Dendritic cell treated with granulocyte-macrophage colony-stimulating factor and Interleukin-4, amounts not matched to agents 40 ng/mL and 50 ng/mL, for 4 days (primary cell): ENCODE measurements at regions of chr10 and their contacts with region 1.

Region 1: GRCh38 chr10:14971867-14972448 is 12.8 kb downstream of the MEIG1 start:
- H3K4me3 Mint-ChIP-seq: no peak overlapping the region
- H3K27ac Mint-ChIP-seq: no peak overlapping the region
- H3K4me1 Mint-ChIP-seq: peaks cover 5% of the 10 kb centered on the region
- H3K27me3 Mint-ChIP-seq: peaks cover 6% of the 10 kb centered on the region

Region 2: GRCh38 chr10:14499601-14499904 is 472.4 kb before region 1 on chr10:
- intact Hi-C with region 1: loop called (anchors 5 kb)
- H3K4me3 Mint-ChIP-seq: no peak overlapping the region
- H3K27ac Mint-ChIP-seq: no peak overlapping the region
- H3K4me1 Mint-ChIP-seq: peaks cover 19% of the 10 kb centered on the region
- H3K27me3 Mint-ChIP-seq: peaks cover 18% of the 10 kb centered on the region

Region 3: DNA sequence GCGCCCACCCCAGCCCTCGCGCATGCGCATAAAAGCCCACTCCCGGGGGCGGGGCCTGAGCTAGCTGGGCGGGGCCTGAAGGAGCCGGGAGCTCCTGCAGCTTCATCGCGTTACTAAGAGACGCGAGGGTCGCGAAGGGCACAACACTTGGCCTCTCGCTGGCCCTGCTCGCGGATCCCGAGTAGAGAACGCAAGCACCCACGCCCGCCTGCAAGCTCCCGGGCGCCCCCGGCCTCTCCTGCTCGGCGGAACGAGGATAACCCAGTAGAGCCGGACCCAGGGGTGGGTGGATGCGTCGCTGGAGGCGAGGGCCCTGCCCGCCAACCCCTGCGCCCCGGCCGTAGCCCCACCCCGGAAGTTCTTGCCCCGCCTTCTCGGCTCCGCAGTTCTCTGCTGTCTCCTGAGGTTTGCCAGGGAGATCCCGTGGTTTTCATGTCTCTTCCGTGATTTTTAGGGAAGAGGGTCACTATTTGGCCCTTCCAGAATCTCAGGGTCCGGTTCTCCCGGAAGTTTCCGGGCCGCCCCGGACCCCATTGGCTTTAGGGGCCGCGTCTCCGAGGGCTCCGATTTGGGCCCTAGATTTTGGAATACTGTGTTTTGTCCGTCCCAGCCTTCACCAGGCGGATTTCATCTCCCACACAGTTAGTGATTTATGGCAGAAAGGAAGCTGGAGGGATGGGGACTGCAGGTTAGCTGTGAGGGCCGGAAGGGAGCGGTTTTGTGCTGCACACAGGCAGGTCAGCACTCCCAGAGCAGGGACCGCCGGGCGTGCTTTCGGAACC is 12.5 kb before region 1 on chr10 and contains the start of gene MEIG1:
- intact Hi-C with region 1: no loop called
- H3K4me3 Mint-ChIP-seq: peak within 1 kb of the TSS; percentile 89
- H3K27ac Mint-ChIP-seq: peak within 1 kb of the TSS; percentile 99
- H3K4me1 Mint-ChIP-seq: peaks cover 20% of the 10 kb centered on the region
- H3K27me3 Mint-ChIP-seq: no peaks in the 10 kb centered on the region

Region 4: GRCh38 chr10:15015451-15015850 is 43.5 kb after region 1 on chr10:
- intact Hi-C with region 1: no loop called
- H3K4me3 Mint-ChIP-seq: no peak overlapping the region
- H3K27ac Mint-ChIP-seq: no peak overlapping the region
- H3K4me1 Mint-ChIP-seq: no peaks in the 10 kb centered on the region
- H3K27me3 Mint-ChIP-seq: peaks cover 2% of the 10 kb centered on the region

Region 5: DNA sequence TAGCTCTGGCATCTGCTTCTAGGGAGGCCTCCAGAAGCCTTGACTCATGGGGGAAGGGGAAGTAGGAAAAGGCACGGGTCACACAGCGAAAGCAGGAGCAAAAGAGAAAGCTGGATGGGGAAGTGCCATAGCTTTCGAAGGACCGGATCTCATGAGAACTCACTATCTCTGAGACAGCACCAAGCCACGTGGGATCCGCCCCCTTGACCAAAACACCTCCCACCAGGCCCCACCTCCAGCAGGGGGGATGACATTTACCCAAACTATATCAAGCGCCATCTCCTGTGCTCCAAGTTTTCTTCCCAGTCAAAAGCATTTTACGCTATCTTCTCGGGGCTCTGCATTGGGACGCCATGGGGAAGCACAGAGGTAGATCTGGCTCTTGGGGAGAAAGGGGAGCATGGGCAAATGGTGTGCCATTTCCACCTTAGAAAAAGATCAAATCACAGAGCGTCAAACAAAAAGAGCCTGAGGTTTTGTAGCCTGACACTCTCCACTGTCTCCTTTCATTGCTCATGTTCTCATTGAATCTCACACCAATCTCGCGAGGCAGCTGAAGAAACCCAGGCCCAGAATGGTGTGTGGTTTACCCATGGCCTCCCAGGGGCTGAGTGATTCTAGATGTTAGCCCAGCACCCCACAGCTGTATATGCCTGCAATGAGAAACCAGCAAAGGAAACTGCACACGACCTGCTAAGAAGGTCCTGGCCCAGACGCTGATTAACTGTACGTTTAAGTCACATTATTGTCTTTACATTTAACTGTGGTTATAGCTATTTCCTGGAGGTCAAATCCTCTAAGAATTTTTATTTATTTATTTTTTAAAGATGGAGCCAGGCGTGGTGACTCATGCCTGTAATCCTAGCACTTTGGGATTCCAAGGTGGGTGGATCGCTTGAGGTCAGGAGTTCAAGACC is 63.7 kb after region 1 on chr10:
- intact Hi-C with region 1: loop called (anchors 10 kb)
- H3K4me3 Mint-ChIP-seq: no peak overlapping the region
- H3K27ac Mint-ChIP-seq: peak overlapping the region; percentile 38
- H3K4me1 Mint-ChIP-seq: peaks cover 38% of the 10 kb centered on the region
- H3K27me3 Mint-ChIP-seq: peaks cover 6% of the 10 kb centered on the region